Dendritic cell treated with granulocyte-macrophage colony-stimulating factor and Interleukin-4, amounts not matched to agents 40 ng/mL and 50 ng/mL, for 4 days (primary cell): ENCODE measurements at regions of chr14 and their contacts with region 1.

Region 1: DNA sequence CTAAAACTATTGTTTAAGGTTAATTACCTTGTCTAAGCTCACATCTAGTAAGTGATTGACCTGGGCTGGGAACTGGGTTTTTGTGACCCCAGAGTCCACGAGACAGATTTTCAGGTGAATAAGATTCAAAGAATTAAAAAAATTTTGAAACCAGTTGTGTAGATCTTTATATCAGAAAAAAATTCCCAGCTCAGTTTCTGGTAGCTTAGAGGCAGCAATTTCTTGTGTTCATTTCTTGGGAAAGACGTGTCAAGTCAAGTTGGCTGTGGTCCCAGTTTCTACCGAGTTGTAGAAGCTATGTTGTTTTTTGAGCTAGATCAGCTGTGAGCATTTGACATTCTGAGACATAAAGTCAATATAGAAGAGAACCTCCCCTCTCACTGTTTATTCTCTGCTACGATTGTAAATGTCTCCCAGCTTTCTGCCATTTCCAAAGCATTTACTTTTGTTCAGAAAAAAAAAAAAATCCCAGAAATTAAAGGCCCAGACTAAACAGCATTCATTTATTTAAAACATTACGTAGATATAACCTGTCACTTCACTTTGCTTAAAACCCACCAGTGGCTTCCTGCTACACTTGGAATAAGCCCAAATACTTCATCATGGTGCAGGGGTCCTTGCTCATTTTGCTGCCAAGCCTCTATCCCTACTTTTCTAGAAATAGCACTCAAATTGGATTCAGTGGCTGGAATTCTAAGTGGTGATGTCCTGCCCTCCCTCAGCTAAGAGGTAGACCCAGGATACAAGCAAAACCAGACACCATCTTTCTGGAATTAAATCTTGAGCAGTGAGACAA is 20.5 kb upstream of the PYGL start:
- H3K4me3 Mint-ChIP-seq: no peak overlapping the region
- H3K27ac Mint-ChIP-seq: no peak overlapping the region
- H3K4me1 Mint-ChIP-seq: peaks cover 30% of the 10 kb centered on the region
- H3K27me3 Mint-ChIP-seq: peaks cover 2% of the 10 kb centered on the region

Region 2: GRCh38 chr14:51094901-51095853 is 130.4 kb after region 1 on chr14 and contains the start of gene TRIM9:
- intact Hi-C with region 1: loop called (anchors 10 kb)
- H3K4me3 Mint-ChIP-seq: peak within 1 kb of the TSS; percentile 87
- H3K27ac Mint-ChIP-seq: peak within 1 kb of the TSS; percentile 32
- H3K4me1 Mint-ChIP-seq: peaks cover 27% of the 10 kb centered on the region
- H3K27me3 Mint-ChIP-seq: peaks cover 45% of the 10 kb centered on the region